ENCODE measurements at regions of chr11 and their contacts with region 1.

Region 1: GRCh38 chr11:33362051-33362910 is 105.1 kb downstream of the HIPK3 start:
- DNase-seq: peak; percentile 50
- CTCF ChIP-seq: peak; percentile 59

Region 2: DNA sequence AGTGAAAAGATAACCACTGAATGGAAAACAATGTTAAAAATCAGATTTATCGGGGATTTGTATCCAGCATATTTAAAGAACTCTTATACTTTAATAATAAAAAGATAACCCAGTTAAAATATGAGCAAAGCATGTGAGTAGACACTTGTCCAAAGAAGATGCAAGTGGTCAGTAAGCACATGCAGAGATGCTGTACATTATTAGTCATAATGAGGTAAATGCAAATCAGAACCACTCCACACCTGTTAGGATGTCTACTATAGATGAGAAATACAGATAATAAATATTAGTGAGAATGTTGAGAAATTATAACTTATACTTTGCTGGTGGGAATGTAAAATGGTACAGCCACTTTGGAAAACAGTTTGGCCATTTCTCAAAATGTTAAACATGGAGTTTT is 441.7 kb before region 1 on chr11:
- in situ Hi-C with region 1: no loop called
- DNase-seq: no peak
- CTCF ChIP-seq: no peak

Region 3: GRCh38 chr11:33435216-33435615 is 72.9 kb after region 1 on chr11:
- in situ Hi-C with region 1: no loop called
- DNase-seq: peak; percentile 41
- CTCF ChIP-seq: no peak

Region 4: DNA sequence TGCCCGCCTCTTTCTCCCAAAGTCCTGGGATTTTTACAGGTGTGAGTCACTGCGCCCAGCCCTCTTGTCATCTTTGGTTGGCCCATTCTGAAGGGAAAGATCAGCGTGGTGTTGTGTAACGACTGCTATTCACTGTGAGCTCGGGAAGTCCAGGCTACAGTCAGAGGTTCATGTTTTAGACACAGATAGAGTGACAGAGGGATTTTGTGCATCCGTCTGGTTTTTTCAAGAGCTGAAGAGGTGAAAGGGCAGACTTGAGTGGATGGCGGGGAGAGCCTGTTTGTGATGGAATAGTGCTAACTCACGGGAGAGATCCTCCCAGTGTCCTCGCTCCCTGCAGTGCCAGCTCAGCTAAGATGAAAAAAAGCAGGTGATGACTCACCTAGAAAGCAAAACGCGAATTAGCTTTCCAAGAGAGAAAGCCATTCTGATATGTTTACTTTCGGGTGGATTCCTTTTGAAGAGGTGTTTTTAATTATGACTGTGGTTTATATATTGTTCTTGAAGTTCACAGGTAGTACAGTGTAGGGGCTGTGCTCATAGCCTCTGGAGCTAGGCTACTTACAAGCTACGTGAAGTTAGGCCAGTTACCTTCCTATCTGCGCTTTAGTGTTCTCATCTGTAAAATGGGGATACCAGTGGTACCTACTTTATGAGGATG is 271.1 kb after region 1 on chr11:
- in situ Hi-C with region 1: no loop called
- DNase-seq: no peak
- CTCF ChIP-seq: no peak

Region 5: DNA sequence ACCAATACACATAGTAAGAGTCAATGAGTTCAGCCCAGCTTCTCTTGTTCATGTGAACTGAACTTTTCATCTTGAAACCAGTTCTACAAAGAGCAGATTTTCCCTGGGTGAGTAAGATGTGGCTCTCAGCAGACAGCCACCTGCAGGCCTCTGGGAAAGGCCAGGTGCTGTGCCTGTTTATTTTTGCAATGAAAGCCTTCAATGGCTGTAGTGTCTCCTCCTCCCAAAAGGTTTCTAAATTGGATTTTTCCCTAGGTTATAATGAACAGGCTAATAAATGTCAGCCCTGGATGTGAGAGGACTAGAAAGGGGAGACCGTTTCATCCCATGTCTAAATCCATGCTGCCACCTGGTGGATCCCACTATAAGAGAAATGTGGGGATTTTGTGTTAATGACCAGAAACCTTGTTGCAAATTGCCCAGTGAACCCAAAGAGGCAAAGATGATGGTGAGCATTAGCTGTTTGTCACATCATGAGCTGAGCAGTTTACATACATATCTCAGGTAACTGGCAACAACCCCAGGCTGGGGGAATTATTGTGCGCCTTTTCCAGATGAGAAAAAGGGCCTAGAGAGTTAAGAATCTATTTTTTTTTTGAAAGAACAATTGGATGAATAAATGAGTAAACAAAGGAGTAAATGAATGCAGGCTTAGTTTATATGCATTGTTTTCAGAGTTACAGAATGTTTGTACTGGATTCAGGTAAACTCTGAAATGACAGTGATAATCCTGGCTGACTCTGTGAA is 325.6 kb after region 1 on chr11:
- in situ Hi-C with region 1: loop called (anchors 10 kb)
- DNase-seq: peak; percentile 60
- CTCF ChIP-seq: peak; percentile 31